HepG2 (cell line): ENCODE measurements at regions of chr4 and their contacts with region 1.

Region 1: GRCh38 chr4:53614591-53614990 is 23.3 kb upstream of the LNX1 start:
- DNase-seq: no peak
- ATAC-seq: peak; percentile 32; the same call in 1 of the 3 replicates
- H3K4me3 ChIP-seq: no peak overlapping the region
- H3K27ac ChIP-seq: no peak overlapping the region
- H3K4me1 ChIP-seq: no peaks in the 10 kb centered on the region
- H3K27me3 ChIP-seq: no peaks in the 10 kb centered on the region; a peak in 1 of 5 replicates
- CTCF ChIP-seq: peak; percentile 10; the same call in 1 of the 2 replicates
- EP300 ChIP-seq: no peak
- POLR2A ChIP-seq: no peak
- RAD21 ChIP-seq: no peak

Region 2: DNA sequence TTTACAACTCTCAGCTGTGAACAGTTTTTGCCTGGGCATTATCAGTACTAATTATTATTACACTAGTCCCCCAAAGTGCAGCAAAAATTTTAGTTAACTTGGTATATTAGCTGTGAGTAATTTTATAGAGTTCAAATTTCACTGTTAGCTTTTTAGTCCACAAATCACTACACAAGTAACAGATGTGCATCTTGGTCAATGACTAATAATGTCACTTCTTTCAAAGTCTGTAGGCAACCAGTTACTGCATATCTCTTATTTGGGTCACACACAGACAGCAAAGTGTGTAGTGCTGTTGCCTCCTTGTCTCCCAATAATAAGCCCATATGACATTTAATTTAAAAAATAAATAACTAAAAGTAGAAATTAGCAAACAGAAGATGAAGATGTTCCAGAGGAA is 408.6 kb before region 1 on chr4:
- CTCF ChIA-PET with region 1: no interaction called
- POLR2A ChIA-PET with region 1: no interaction called
- in situ Hi-C with region 1: no loop called
- intact Hi-C with region 1: loop called (anchors 5 kb)
- DNase-seq: no peak
- ATAC-seq: no peak
- H3K4me3 ChIP-seq: no peak overlapping the region
- H3K27ac ChIP-seq: no peak overlapping the region
- H3K4me1 ChIP-seq: peaks cover 12% of the 10 kb centered on the region
- H3K27me3 ChIP-seq: no peaks in the 10 kb centered on the region
- CTCF ChIP-seq: no peak
- EP300 ChIP-seq: no peak
- POLR2A ChIP-seq: no peak
- RAD21 ChIP-seq: no peak

Region 3: DNA sequence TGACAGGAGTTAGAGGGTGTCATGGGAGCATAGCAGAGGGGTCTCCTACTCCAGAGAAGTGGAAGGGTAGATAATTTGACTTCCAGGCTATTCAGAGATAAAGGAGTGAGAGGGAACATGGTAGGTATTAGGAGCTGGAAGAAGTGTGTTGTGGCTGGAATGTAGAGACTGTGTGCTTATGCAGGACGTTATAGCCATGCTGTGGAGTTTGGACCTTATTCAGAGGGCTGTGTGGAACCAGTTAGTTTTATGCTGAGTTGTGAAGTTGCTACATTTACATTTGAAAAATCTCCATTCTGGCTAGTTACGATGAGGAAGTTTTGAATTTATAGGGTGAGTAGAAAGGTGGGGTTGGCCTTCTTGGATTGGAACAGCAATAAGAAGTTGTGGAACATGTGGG is 169.6 kb before region 1 on chr4:
- CTCF ChIA-PET with region 1: no interaction called
- POLR2A ChIA-PET with region 1: no interaction called
- in situ Hi-C with region 1: no loop called
- intact Hi-C with region 1: no loop called
- DNase-seq: peak; percentile 5
- ATAC-seq: peak; percentile 84
- H3K4me3 ChIP-seq: no peak overlapping the region
- H3K27ac ChIP-seq: no peak overlapping the region
- H3K4me1 ChIP-seq: 0 out of 2 replicates have a peak, but pooled peaks cover 6% of the 10 kb centered on the region
- H3K27me3 ChIP-seq: no peaks in the 10 kb centered on the region
- CTCF ChIP-seq: no peak
- EP300 ChIP-seq: no peak
- POLR2A ChIP-seq: no peak
- RAD21 ChIP-seq: no peak